Right ventricle myocardium inferior (tissue), 1 donor: ENCODE measurements at regions of chr4 and their contacts with region 1.

Region 1: GRCh38 chr4:11720292-11720691 is 291.6 kb upstream of the HS3ST1 start:
- DNase-seq: no peak
- ATAC-seq: no peak

Region 2: DNA sequence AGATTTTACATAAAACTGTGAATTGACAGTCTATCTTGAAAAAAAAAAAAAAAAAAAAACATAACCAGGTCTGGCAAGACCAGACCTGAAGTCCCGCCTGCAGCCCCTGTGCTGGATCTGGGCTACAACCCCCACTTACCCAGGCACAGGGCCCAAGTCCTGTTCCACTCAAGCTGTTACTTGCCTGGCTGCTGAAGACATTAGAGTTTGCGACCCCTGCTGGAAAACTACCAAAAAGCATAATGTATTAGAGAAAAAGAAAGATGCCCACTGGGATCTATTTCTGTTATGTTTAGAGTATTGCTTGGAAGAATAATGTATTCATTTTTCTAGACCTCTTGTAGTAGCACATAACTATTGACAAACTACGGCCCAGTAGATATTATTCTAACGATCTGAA is 296.3 kb before region 1 on chr4:
- intact Hi-C with region 1: loop called (anchors 5 kb)
- DNase-seq: no peak
- ATAC-seq: no peak

Region 3: DNA sequence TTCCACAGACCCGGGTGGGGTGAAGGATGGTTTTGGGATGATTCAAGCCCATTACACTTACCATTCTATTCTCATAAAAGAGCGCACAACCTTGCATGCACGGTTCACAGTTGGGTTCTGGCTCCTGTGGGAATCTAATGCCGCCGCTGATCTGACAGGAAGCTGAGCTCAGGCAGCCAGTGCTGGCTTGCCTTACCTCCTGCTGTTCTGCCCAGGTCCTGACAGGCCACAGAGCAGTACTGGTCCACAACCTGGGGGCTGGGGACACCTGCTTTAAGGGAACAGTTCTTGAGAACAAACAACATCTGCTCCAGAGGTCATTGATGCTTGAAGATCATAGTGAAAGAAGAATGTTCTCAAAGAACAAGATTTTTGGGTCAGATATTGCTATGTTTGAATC is 283.6 kb before region 1 on chr4:
- intact Hi-C with region 1: no loop called
- DNase-seq: no peak
- ATAC-seq: no peak